AG04449 (cell line): ENCODE measurements at regions of chr9 and their contacts with region 1.

Region 1: DNA sequence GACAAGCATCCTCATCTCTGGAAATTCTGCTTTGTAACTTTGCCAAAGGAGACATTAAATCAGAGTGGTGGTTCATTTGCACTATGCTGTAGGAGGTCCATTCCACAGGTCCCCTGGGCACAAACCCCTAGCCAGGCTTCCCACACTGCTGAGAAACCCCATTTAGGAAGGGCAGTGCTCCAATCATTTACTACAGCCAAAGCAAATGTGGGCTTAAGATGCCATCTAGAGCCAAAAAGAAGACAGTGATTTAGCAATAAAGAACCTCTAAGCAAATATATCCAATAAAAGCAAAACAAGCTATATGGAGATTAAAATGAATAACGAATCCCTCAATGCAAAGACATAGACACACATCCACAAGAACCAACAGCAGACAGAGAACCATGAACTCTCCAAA is 129.0 kb upstream of the ALDH1B1 start:
- DNase-seq: no peak
- H3K4me3 ChIP-seq: no peak overlapping the region
- CTCF ChIP-seq: no peak

Region 2: DNA sequence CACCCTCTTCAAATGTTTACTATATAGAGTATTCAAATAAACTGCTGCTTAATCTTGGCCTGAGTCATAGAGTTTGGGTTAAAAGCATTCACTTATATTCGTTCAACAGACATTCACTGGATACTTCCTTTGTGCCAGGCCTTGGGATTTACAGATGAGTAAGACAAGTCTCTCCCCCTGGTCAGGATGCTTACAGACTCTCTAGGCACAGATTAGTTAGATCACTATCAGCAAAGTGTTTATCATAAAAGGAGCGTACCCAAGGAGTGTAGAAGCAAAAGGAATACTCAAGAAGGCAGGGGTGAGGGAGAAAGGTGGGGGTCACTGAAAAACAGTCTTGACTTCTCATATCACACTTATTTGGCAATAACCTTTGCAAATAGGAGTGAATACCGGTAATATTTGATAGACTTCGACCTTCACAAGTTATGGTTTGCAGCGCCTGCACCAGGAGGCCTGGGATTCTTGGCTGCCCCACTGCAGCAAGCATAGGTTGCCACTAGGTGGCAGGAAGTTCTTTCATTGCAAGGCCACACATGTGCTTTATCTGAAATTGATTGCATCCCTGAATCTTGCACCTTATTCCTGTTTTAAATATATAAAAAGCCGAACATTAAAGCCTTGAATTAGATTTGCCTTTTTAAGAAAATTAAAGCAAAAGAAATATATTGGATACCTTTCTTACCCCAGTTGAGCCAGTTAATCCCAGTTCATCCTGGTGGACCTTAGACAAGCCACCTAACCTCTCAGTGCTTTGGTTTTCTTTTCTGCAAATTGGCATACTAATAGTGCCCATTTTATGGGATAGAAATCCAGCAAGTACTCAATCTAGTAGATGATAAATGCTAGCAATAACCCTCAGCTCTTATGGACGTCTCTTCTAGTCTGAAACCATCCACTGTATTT is 516.4 kb before region 1 on chr9:
- CTCF ChIA-PET with region 1: interaction called, 12 read pairs
- POLR2A ChIA-PET with region 1: no interaction called
- DNase-seq: peak; percentile 26
- H3K4me3 ChIP-seq: no peak overlapping the region
- CTCF ChIP-seq: peak; percentile 90

Region 3: DNA sequence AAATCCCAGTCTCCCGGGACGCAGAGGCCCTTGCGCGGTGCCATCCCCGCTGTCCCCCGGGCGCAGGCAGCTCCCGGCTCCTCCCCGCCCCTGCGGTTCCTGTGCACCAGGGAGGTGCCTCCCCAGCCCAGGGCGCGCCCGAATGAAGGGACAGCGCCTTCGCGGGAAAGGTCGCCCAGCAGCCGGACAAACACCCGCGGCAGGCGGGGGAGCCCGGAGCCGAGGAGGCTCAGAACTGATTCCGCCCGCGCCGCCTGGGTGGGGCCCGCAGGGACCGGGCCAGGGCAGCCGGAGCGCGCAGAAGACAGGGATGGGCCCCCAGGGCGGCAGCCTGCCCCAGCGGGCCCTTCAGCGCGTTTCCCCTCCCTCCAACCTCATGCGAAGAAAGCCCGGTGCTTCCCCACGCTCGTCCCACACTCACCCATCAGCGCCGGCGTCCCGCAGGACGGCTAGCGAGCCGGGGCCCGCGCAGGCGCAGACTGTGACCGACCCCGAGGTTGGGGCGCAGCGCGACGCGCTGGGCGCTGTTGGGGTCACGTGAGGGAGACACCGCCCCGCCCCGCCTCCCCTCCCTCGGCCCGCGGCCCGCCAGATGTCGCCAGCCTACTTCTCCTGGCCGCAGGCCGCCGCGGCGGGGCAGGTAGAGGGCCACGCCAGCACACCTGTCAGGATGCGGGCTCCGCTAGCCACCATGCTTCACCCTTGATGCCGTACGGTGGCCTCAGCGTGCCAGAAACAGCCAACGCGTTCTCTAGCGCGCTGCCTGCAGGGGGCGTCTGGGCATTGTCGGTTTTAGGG is 359.7 kb before region 1 on chr9 and contains the start of gene SLC25A51:
- CTCF ChIA-PET with region 1: interaction called, 24 read pairs
- POLR2A ChIA-PET with region 1: no interaction called
- DNase-seq: no peak
- H3K4me3 ChIP-seq: peak within 1 kb of the TSS; percentile 83
- CTCF ChIP-seq: peak; percentile 99

Region 4: DNA sequence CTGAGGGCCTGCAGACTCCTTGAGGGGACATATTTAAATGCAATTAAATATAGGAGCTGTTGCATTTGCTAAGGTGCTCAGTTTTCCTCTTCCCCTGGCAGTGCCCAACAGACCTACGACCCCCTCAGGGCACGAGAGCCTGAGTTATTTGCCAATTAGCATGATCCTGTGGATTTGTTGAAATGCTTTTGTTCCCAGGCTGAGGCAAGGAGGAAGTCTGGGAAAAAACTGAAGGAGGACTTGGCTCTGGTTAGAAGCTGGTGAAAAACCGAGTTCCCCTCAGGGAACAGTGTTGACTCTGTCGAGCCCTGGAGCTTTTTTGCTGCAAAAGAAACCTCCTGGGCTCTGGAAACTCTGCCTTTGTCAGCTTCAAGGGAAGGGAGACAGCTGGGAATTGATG is 90.9 kb before region 1 on chr9:
- CTCF ChIA-PET with region 1: no interaction called
- POLR2A ChIA-PET with region 1: no interaction called
- DNase-seq: no peak
- H3K4me3 ChIP-seq: no peak overlapping the region
- CTCF ChIP-seq: no peak